Activated CD4-positive, alpha-beta T cell treated with anti-CD3 and anti-CD28 coated beads for 36 hours (primary cell): ENCODE measurements at regions of chr2 and their contacts with region 1.

Region 1: DNA sequence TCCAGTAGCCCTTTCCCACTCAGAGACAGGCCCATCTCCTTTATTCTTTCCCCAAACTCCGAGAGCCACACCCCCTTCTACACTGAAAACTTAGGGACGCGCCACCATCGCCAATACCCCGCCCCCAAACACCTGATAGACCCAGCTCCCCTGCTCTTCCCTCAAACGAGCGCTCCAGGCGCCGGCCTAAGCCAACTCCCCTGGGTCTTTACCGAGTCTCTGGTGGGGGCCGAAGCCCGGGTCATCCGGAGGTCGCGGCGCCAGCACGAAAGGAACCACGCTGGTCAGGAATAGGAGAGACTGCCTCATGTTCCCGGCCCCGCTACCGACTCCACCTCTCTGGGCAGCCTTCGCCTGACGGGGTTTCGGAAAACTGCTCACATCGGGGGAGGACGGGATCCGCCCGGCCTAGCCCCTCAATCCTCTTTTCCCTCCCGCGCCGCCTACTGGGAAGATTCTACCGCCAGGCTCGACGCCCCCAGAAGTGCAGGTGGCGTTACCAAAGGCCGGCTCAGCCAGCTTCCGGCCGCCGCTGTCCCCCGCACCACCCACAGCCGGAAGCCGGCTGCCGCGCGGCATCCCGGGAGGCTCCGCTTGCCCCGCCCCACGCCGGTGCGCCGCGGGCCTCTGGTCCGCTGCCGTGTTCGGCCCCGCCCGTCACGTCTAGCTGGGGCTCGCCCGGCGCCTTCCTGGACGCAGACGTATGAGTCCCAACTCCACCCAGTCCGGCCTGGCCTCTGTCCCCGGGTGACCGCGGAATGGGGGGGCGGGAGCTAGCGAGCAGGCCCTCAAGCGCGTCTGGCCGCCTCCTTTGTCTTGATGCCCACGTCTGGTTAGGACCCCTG is at the start of gene ADAM17:
- DNase-seq: peak; percentile 92
- ATAC-seq: peak; percentile 87
- H3K4me3 Mint-ChIP-seq: peak within 1 kb of the TSS; percentile 97
- H3K27ac Mint-ChIP-seq: peak within 1 kb of the TSS; percentile 95
- H3K4me1 Mint-ChIP-seq: peaks cover 50% of the 10 kb centered on the region
- H3K27me3 Mint-ChIP-seq: no peaks in the 10 kb centered on the region
- total RNA-seq, gene ADAM17: 20.2 to 23.1 TPM

Region 2: GRCh38 chr2:9142551-9143263 is 412.8 kb before region 1 on chr2:
- CTCF ChIA-PET with region 1: no interaction called
- POLR2A ChIA-PET with region 1: no interaction called
- intact Hi-C with region 1: loop called in 1 of 2 experiments (anchors 10 kb)
- DNase-seq: peak; percentile 90
- ATAC-seq: peak; percentile 93
- H3K4me3 Mint-ChIP-seq: no peak overlapping the region
- H3K27ac Mint-ChIP-seq: no peak overlapping the region
- H3K4me1 Mint-ChIP-seq: no peaks in the 10 kb centered on the region
- H3K27me3 Mint-ChIP-seq: peaks cover 14% of the 10 kb centered on the region

Region 3: DNA sequence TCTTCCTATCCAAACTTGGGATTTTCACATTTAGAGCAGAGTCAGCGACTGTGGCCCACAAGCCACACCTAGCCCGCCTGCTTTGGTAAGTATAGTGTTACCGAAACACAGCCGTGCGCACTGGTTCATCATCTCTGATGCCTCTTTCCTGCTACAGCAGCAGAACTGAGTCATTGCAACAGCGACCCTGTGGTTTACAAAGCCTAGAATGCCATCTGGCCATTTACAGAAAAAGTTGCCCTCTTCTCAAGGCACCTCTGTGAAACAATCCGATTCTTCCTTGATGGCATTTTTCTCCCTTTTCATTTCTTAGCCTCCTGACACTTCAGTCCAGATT is 91.9 kb before region 1 on chr2:
- CTCF ChIA-PET with region 1: no interaction called
- POLR2A ChIA-PET with region 1: no interaction called
- intact Hi-C with region 1: no loop called
- DNase-seq: peak; percentile 58
- ATAC-seq: peak; percentile 88
- H3K4me3 Mint-ChIP-seq: no peak overlapping the region
- H3K27ac Mint-ChIP-seq: peak overlapping the region; percentile 62
- H3K4me1 Mint-ChIP-seq: peaks cover 9% of the 10 kb centered on the region
- H3K27me3 Mint-ChIP-seq: no peaks in the 10 kb centered on the region

Region 4: DNA sequence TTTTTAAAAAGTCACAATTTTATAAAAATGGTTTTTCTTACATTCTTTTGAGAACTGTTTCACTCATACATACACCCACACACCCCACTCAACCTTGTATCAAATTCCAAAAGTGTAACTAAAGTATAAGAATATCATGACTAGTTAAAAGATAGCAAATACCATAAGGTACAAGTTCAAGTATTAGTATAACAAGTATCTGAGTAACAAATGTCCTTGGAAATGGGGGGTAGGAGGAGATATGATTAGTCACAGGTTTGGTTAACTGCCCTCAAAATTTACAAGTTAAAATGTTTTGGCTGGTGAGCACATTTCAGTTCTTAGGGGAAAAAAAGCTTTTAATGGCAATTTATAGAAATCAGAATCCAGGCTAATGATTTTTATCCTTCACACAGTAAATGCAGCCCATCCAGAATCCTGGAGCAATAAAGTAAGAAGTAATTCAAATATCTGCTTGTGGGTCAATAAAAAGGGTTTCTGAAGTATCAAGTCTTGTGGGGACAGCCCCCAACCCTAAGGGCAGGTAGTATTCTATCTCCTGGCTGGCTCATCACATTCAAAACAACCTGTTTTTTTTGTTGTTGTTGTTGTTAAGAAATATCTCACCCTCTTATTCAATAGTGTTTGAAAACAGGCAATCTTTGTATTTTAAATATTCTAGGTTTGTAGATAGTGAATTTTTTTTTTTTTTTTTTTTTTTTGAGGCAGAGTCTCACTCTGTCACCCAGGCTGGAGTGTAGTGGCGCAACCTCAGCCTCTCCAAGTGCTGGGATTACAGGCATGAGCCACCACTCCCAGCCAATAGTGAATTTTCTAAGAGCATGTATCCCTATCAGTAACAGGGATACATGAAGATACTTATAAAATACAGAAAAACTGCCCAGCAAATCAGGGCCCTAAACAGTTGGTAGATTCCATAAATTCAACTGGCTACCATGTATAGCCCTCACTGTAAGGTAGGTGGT is 66.7 kb before region 1 on chr2:
- CTCF ChIA-PET with region 1: no interaction called
- POLR2A ChIA-PET with region 1: interaction called, 5 read pairs
- intact Hi-C with region 1: loop called (anchors 1 kb)
- DNase-seq: no peak
- ATAC-seq: peak; percentile 66
- H3K4me3 Mint-ChIP-seq: no peak overlapping the region
- H3K27ac Mint-ChIP-seq: peak overlapping the region; percentile 51
- H3K4me1 Mint-ChIP-seq: peaks cover 29% of the 10 kb centered on the region
- H3K27me3 Mint-ChIP-seq: no peaks in the 10 kb centered on the region

Region 5: GRCh38 chr2:9630749-9631483 is 75.4 kb after region 1 on chr2 and contains the start of gene YWHAQ:
- CTCF ChIA-PET with region 1: interaction called, 8 read pairs
- POLR2A ChIA-PET with region 1: interaction called, 9 read pairs
- intact Hi-C with region 1: loop called (anchors 1 to 2 kb)
- DNase-seq: peak; percentile 97
- ATAC-seq: peak; percentile 89
- H3K4me3 Mint-ChIP-seq: peak within 1 kb of the TSS; percentile 99
- H3K27ac Mint-ChIP-seq: peak within 1 kb of the TSS; percentile 95
- H3K4me1 Mint-ChIP-seq: peaks cover 45% of the 10 kb centered on the region
- H3K27me3 Mint-ChIP-seq: no peaks in the 10 kb centered on the region
- total RNA-seq, gene YWHAQ: 370 to 508 TPM

Region 6: GRCh38 chr2:9739531-9739964 is 184.0 kb after region 1 on chr2:
- CTCF ChIA-PET with region 1: interaction called, 3 read pairs
- POLR2A ChIA-PET with region 1: interaction called, 3 read pairs
- intact Hi-C with region 1: loop called in 1 of 2 experiments (anchors 1 kb)
- DNase-seq: peak; percentile 73
- ATAC-seq: peak; percentile 75
- H3K4me3 Mint-ChIP-seq: peak overlapping the region; percentile 65
- H3K27ac Mint-ChIP-seq: peak overlapping the region; percentile 92
- H3K4me1 Mint-ChIP-seq: peaks cover 53% of the 10 kb centered on the region
- H3K27me3 Mint-ChIP-seq: no peaks in the 10 kb centered on the region

Region 7: DNA sequence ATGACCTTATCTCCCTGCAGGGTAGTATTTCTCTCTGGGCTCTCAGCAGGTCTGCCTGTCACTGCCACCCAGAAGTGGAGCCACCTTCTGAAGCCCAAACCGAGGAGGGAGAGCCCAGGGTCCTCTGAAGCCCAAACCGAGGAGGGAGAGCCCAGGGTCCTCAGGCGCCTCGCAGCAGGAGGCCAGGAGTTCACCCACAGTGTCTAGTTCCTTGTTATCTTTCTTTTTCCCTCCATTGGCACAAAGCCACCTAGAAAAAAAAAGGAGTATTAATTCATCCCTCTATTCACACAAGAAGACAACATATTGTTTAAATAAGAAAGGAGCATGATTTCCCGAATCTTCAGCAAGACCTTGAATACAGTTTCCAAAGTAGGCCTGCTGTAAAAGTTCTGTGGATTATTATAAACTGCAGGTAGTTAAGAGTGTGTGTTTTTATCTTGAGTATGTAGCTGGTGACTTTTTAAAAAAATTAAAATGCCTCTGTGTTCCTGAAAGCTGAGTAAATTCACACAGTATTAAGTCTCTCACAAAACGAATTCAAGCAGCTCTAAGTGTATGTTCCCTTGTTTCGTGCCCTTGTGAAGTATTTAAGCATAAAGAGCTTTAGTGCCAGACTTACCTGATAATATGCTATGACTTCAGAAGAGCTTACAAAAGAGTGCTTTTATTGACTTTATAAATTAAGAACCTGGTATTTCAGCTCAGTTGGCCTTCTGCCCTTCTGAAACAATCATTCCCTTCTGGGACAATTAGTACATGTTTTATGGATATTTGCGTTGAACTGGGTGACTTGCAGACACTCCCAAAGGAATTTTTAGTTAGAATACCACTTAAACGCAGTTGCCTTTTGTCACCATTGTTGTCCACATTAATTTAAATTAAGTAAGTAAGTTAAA is 384.3 kb after region 1 on chr2:
- CTCF ChIA-PET with region 1: no interaction called
- POLR2A ChIA-PET with region 1: no interaction called
- intact Hi-C with region 1: no loop called
- DNase-seq: no peak
- ATAC-seq: no peak
- H3K4me3 Mint-ChIP-seq: no peak overlapping the region
- H3K27ac Mint-ChIP-seq: no peak overlapping the region
- H3K4me1 Mint-ChIP-seq: peaks cover 3% of the 10 kb centered on the region
- H3K27me3 Mint-ChIP-seq: no peaks in the 10 kb centered on the region

Region 8: DNA sequence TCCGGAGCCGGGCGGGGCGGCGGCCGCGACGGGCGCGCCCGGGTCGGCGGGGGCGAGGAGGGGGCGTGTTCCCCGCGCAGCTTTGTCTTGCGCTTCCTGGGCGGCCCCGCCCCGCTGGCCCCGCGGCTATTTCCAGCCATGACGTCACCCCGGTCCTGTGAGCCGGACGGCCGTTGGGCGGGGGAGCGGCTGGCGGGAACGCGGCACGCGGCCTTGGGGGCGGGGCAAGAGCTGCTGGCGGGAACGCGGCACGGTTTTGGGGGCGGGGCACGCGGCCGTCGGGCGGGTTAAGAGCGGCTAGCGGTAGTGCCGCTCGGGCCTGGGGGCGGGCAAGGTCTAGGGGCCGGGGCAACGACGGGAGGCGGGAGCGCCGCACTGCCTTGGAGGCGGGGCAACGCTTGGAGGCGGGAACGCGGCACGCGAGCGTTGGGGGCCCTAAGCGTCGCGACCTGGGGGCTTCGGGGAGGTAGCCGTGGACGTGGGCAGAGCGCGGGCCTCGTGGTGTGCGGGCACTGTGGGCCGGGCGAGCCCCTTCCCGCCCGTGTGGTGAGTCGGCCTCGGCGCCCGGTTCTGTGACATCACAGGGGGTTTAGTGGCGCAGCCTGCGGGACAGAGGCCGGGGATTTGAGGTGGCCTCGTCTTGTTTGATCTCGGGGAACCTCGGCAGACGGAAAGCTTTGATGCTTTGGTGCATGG is 488.5 kb after region 1 on chr2:
- CTCF ChIA-PET with region 1: interaction called, 3 read pairs
- POLR2A ChIA-PET with region 1: no interaction called
- intact Hi-C with region 1: loop called (anchors 10 kb)
- DNase-seq: peak; percentile 95
- ATAC-seq: peak; percentile 81
- H3K4me3 Mint-ChIP-seq: peak overlapping the region; percentile 66
- H3K27ac Mint-ChIP-seq: peak overlapping the region; percentile 78
- H3K4me1 Mint-ChIP-seq: peaks cover 12% of the 10 kb centered on the region
- H3K27me3 Mint-ChIP-seq: peaks cover 3% of the 10 kb centered on the region